PC-9 (cell line): ENCODE measurements at regions of chr1 and their contacts with region 1.

Region 1: GRCh38 chr1:66271216-66271903 is 262.6 kb upstream of the SGIP1 start:
- DNase-seq: peak in 1 of 2 experiments; percentile 74
- H3K4me3 ChIP-seq: no peak overlapping the region
- H3K27ac ChIP-seq: no peak overlapping the region
- H3K4me1 ChIP-seq: no peaks in the 10 kb centered on the region
- H3K27me3 ChIP-seq: no peaks in the 10 kb centered on the region
- CTCF ChIP-seq: no peak

Region 2: DNA sequence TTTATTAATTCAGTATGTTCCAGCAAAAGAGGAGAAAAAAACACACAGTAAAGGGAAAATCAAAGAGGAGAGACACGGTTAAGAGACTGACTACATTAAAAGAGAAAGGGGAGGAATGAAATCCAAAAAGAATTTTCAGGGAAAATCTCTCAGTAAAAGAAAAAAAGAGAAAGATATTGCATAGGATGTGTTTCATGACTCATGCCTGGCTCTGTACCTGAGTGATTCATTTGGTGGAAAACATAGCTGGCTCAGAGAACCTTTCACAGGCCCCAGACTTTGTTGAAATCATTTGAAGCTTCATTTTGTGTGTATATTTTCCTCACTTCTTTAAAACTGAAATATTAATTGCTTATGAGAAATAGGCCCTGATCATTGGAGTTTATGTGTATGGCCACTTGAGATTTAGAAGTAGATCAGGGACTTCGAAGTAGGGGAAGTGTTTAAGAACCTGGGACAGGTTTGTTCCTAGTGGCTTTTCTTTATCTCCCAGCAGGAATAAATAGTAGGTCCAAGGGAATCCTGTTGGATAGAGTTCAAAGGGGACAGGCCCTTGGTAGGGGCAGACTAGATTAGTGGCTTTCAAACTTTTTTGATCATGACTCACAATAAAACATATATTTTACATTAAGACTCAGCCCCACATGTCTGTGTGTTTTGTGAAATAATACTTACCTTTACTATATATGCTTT is 23.5 kb after region 1 on chr1:
- CTCF ChIA-PET with region 1: interaction called, 3 read pairs
- POLR2A ChIA-PET with region 1: interaction called, 3 read pairs
- intact Hi-C with region 1: loop called (anchors 2 kb)
- DNase-seq: peak; percentile 35 to 53
- H3K4me3 ChIP-seq: no peak overlapping the region
- H3K27ac ChIP-seq: peak overlapping the region; percentile 87
- H3K4me1 ChIP-seq: peaks cover 18% of the 10 kb centered on the region
- H3K27me3 ChIP-seq: no peaks in the 10 kb centered on the region
- CTCF ChIP-seq: no peak

Region 3: DNA sequence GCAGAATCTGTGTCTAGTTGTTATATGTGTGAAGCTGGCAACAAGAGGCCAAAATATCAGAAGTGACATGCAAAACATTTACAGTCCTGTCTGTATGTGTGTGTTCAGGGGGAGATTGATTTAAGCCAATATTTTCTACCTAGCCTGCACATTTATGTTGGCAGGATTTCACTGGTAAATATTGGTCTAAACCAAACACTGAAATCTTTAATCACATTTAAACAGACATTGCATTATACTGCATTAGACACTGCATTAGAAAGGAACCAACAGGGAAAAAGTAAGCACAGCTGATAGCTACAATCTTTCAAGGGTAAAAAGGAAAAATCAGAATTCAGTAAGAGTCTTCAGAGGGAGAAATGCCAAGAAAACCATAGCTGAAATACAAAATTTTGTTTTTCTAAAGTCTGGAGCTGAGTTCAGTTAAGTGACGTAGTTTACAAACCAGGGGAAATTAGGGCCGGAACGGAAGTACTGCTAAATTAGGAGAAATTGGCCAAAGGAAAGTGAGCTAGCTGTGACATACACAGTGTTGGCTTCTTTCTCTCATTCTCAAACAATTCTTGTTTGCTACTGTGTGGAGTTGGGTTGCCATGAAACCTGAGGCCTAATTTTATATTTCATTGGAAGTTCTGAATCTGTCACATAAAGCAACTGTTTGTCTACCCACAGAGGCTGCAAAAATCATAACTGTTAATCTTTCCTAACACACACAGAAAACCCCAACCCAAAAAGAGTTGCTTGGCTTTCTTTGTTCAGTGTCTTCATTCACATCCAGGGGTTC is 45.3 kb after region 1 on chr1:
- CTCF ChIA-PET with region 1: no interaction called
- POLR2A ChIA-PET with region 1: no interaction called
- intact Hi-C with region 1: no loop called
- DNase-seq: no peak
- H3K4me3 ChIP-seq: no peak overlapping the region
- H3K27ac ChIP-seq: no peak overlapping the region
- H3K4me1 ChIP-seq: no peaks in the 10 kb centered on the region
- H3K27me3 ChIP-seq: no peaks in the 10 kb centered on the region
- CTCF ChIP-seq: no peak

Region 4: DNA sequence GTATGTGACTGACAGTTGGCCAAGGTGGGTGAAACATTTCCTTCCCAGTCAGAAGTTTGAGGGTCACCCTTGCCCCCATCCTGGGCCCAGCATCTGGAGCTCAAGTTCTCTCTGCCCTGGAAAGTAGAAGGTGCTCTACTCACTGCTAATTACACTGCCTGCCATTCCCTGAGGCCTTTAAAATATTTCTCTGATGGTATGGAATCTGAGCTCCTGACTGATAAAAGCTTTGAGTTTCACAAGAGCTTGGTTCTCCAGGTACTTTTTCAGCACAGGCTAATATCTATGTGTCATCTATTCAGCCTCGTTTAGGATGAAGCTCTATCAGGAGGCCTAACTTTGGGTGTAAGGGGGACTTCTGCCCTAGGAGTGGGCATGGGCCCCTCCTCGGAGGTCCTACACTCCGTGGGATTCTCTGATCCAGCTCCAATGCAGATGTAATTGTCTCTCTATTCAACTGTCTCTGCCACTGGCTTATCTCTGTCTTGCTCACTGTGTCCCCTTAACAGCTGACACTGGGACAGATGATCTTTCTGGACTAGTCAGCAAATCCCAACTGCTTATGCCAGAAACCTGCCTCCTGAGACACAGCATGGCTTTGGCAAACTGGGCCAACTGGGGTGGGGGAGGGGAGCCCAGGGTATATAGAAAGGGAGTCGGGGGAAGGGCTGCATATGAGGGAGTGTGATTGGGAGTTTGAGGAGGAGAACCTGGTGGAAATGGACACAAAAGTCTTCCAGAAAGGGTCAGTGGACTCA is 1309.5 kb after region 1 on chr1:
- CTCF ChIA-PET with region 1: no interaction called
- POLR2A ChIA-PET with region 1: interaction called, 10 read pairs
- intact Hi-C with region 1: no loop called
- DNase-seq: peak in 1 of 2 experiments; percentile 94
- H3K4me3 ChIP-seq: no peak overlapping the region
- H3K27ac ChIP-seq: peak overlapping the region; percentile 85
- H3K4me1 ChIP-seq: peaks cover 59% of the 10 kb centered on the region
- H3K27me3 ChIP-seq: no peaks in the 10 kb centered on the region
- CTCF ChIP-seq: no peak